ENCODE measurements at regions of chr2 and their contacts with region 1.

Region 1: DNA sequence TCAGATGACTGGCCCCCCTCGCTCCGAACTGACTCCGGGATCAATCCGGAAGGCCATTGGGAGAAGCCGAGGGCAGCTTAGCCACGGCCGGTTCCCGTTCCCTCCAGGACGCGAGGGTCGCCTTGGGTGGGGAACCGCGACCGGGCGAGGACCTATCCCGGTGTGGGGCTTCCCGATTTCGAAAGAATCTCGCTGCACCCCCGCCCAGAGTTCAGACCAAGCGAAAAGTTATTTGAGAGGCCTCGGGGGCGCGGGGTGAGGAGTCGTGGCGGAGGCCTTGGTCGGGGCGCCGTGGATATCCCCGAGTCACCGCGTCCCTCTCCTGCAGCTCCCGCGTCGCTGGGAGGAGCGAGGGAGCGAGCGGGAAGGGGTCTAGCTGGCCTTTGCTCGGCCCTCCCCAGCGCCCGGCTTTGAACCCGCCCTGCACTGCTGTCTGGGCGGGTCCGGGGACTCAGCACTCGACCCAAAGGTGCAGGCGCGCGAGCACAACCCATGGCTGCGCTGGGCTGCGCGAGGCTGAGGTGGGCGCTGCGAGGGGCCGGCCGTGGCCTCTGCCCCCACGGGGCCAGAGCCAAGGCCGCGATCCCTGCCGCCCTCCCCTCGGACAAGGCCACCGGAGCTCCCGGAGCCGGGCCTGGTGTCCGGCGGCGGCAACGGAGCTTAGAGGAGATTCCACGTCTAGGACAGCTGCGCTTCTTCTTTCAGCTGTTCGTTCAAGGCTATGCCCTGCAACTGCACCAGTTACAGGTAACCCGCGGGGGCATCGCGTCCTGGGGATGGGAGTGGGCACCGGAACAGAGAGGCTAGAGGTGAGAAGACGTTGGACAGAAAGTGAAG is at the start of gene CYP27A1:
- DNase-seq: peak; percentile 24 to 38
- ATAC-seq: peak; percentile 65 to 81
- H3K4me3 ChIP-seq: peak within 1 kb of the TSS; percentile 75 to 82 (median 78)
- H3K27ac ChIP-seq: peak within 1 kb of the TSS; percentile 84 to 89 (median 86)
- H3K4me1 ChIP-seq: peaks cover 21 to 22% of the 10 kb centered on the region in 2 donors
- H3K27me3 ChIP-seq: no peaks in the 10 kb centered on the region
- CTCF ChIP-seq: no peak
- POLR2A ChIP-seq: peak; percentile 29 to 52
- total RNA-seq, gene CYP27A1: 17.9 to 56.3 (median 26.8) TPM

Region 2: DNA sequence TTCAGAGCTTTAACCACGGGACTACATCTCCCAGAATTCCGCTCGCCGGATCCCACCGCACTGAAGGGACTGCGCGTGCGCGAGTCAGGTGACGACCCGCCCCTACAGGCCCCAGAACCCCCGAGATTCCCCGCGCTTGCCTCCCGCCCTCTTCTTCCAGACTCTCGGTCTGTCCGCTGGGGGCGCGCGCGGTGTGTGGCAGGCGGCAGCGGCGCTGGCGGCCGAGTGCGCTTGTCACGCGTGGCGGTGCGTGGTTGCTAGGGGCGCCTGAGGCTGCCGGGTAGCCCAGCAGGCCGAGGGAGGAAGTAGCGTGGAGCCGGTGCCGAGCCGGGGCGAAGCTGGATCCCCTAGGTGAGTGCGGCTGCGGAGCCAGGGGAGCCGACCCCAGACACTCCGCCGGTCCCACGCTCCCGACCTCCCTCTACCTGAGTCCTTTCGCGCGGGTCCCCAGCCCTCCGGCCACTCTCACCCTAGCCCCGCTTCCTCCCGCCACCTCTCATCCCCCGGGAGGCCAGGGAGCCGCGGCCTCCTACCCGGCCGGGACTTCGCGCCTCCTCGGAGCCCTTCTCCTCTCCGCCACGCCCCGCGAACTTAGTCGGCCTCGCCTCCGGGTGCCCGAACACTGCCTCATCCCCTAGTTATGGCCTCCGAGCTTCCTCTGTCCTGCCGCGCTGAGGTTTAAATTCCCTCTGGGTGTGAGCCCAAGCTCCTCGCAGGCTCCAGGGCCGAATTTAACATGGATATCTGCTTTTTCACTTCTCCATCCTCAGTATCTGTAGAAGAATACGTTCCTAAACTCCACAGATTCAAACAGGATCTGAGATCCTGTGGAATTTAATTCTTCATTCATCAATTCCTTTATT is 71.0 kb before region 1 on chr2 and contains the start of gene TTLL4:
- in situ Hi-C with region 1: loop called in 1 of 4 experiments (anchors 10 kb)
- intact Hi-C with region 1: loop called (anchors 5 kb)
- DNase-seq: peak; percentile 96 to 97
- ATAC-seq: peak; percentile 97 to 98
- H3K4me3 ChIP-seq: peak within 1 kb of the TSS; percentile 70 to 90 (median 83)
- H3K27ac ChIP-seq: peak within 1 kb of the TSS; percentile 81 to 92 (median 86)
- H3K4me1 ChIP-seq: peaks cover 9% of the 10 kb centered on the region in 2 donors
- H3K27me3 ChIP-seq: no peaks in the 10 kb centered on the region
- CTCF ChIP-seq: peak; percentile 84 to 95 (median 88)
- POLR2A ChIP-seq: peak; percentile 55 to 69
- total RNA-seq, gene TTLL4: 4.4 to 16.2 (median 6.4) TPM

Region 3: DNA sequence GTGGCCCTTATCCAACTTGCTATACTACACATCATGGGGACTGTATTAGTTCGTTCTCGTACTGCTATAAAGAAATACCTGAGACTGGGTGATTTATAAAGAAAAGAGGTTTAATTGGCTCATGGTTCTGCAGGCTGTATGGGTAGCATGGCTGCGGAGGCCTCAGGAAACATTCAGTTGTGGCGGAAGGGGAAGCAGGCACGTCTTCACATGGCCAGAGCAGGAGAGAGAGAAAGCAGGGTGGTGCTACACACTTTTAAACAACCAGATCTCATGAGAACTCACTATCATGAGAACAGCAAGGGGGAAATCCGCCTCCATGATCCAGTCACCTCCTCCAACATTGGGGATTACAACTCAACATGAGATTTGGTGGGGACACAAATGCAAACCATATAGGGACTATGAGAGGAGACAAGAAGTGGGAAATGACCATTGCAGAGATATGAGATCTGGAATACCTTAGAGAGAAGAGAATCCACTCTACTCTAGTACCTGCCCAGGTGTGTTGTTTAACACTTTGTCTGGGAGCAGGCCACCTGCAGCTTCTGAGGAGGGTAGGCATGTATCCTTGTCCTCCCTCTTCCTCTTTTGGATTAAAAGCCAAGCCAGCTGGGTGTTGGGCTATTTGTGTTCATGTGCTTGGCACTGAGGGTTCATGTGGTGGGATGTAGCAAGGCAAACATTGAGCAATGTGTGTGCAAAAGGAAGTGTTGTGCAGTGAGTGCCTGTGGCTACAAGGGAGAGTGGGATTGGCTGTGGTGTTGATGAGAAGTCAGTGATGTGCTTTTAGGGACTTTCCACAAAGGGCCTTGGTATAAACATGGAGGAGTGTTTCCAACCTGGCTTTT is 48.5 kb before region 1 on chr2:
- in situ Hi-C with region 1: no loop called
- intact Hi-C with region 1: loop called (anchors 5 kb)
- DNase-seq: peak in 1 of 2 donors; percentile 46
- ATAC-seq: peak; percentile 38 to 64
- H3K4me3 ChIP-seq: no peak overlapping the region
- H3K27ac ChIP-seq: peak overlapping the region in 1 of 4 donors; percentile 28
- H3K4me1 ChIP-seq: peaks cover 0 to 7% of the 10 kb centered on the region in 2 donors
- H3K27me3 ChIP-seq: no peaks in the 10 kb centered on the region
- CTCF ChIP-seq: no peak
- POLR2A ChIP-seq: peak in 1 of 2 donors; percentile 8

Region 4: GRCh38 chr2:218832520-218832919 is 50.6 kb after region 1 on chr2:
- in situ Hi-C with region 1: loop called in 1 of 4 experiments (anchors 10 kb)
- intact Hi-C with region 1: no loop called
- DNase-seq: peak; percentile 77 to 91
- ATAC-seq: peak; percentile 66 to 76
- H3K4me3 ChIP-seq: no peak overlapping the region
- H3K27ac ChIP-seq: peak overlapping the region; percentile 95
- H3K4me1 ChIP-seq: peaks cover 64 to 65% of the 10 kb centered on the region in 2 donors
- H3K27me3 ChIP-seq: no peaks in the 10 kb centered on the region
- CTCF ChIP-seq: no peak
- POLR2A ChIP-seq: no peak